Activated T-helper 1 cell treated with anti-CD3 and anti-CD28 coated beads, Interleukin-12 subunit alpha, Interleukin-12 subunit beta, Interleukin-2, Interleukin-4 antibody, amounts not matched to agents 30 ng/mL and 10 ng/mL and 1 ng/mL, durations not matched to agents 14 hours and 24 hours and 36 hours (primary cell): ENCODE measurements at regions of chr3 and their contacts with region 1.

Region 1: GRCh38 chr3:153161138-153161713 is 800 bp upstream of the RAP2B start:
- DNase-seq: peak; percentile 91
- H3K4me3 Mint-ChIP-seq: peak overlapping the region; percentile 90
- H3K27ac Mint-ChIP-seq: peak overlapping the region; percentile 97
- H3K4me1 Mint-ChIP-seq: peaks cover 47% of the 10 kb centered on the region
- H3K27me3 Mint-ChIP-seq: no peaks in the 10 kb centered on the region

Region 2: DNA sequence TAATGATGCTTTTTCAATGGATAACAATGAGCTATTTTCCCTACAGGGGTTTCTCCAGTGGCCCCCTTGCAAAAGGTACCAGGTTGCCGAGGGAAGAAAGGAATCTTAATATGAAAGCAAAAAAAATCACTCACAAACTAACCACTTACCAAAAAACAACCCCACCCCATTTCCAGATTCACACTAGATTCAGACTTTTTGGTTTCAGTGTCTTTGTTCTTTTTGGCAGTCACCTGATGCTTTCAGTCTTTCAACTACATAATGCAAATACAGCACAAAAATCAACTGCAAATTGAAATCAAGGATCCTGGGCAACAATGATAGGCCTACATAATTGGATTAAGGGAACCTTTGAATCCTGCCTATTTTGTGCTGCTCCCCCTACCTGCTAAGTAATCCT is 70.3 kb before region 1 on chr3:
- intact Hi-C with region 1: loop called (anchors 2 kb)
- DNase-seq: peak; percentile 4
- H3K4me3 Mint-ChIP-seq: no peak overlapping the region
- H3K27ac Mint-ChIP-seq: no peak overlapping the region
- H3K4me1 Mint-ChIP-seq: peaks cover 15% of the 10 kb centered on the region
- H3K27me3 Mint-ChIP-seq: peaks cover 9% of the 10 kb centered on the region

Region 3: DNA sequence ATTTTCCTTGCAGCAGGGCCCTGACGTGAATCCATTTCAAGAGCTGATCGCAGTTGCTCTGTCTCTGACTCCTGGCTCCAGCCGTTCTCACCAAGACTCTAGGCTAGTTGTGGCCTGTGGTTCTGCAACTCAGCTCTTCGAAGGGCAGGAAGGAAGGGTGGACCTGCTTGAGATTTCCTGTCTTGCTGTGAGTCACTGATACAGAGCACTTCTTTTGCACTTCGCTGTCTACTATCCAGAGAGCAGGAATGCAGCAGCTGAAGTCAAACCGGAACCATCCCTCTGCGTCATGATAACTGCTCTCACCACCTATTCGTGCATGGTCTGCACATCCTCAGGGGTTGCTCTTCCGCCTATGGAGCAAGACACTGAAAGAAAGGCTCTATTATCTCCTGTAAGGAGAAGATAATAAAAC is 60.5 kb after region 1 on chr3:
- intact Hi-C with region 1: loop called (anchors 1 kb)
- DNase-seq: peak; percentile 75
- H3K4me3 Mint-ChIP-seq: peak overlapping the region; percentile 72
- H3K27ac Mint-ChIP-seq: peak overlapping the region; percentile 90
- H3K4me1 Mint-ChIP-seq: peaks cover 47% of the 10 kb centered on the region
- H3K27me3 Mint-ChIP-seq: no peaks in the 10 kb centered on the region

Region 4: DNA sequence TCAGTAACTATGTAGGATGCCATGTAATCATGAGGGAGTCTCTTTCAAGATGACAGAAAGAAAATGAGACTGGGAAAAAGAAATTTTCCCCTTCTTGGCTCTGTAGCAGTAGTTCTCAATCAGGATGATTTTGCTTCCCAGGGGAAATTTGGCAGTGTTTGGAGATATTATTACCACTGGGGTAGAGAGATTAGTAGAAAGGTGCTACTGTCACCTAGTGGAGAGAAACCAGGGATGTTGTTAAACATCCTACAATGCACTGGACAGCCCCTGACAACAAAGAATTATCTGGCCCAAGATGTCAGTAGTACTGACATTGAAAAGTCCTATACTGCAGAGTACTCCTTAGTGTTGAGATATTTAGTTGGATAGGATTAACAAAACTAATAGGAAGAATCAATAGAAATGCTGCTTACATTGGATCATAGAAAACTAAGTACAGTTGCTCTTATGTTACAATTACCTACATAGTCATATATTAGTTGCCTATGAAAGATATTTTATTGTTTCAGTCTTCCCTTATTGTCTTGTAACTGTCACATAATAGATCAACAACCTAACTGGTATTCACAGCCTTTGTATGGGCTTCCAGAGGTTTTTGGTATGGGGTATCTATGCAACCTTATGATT is 434.1 kb after region 1 on chr3:
- intact Hi-C with region 1: loop called (anchors 10 kb)
- DNase-seq: no peak
- H3K4me3 Mint-ChIP-seq: no peak overlapping the region
- H3K27ac Mint-ChIP-seq: no peak overlapping the region
- H3K4me1 Mint-ChIP-seq: no peaks in the 10 kb centered on the region
- H3K27me3 Mint-ChIP-seq: no peaks in the 10 kb centered on the region

Region 5: DNA sequence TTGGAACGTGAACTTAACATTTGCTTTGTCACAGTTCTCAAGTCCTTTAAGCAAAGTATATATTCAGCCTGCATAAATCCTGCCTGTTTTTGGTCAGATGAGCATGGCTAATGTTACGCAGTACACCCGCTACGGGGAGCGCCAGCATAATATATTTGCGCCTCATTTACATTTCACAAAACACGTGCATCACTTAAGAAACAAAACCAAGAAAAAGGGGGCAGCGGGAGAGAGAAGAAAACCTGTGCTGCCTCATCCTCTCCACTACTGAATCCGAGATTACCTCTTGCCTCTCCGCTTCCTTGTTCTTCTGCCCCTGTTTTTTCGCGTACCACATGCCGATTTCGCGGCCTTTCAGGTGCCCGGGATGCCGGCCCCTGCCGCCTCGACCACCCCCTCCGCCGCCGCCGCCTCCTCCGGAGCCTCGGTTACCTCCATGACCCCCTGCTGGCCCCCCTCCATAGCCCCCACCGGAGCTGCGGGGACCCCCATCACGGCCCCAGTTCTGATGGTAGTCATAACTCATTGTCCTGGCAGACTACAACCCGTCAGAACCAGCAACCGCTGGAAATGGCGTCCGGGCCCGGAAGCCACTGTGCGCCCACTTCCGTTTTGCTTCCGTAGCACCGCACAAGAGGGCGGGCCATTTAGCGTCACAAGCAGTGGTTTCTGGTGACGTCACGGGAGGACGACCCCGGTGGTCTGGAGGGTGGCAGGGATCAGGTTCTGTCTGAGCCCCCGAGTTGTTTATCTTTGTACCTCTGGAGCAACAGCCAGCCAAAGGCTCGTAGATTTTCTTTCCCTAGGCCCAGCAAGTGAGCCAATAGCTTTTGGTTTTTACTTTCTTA is 1162.9 kb after region 1 on chr3 and contains the start of gene DHX36:
- intact Hi-C with region 1: loop called (anchors 5 kb)
- DNase-seq: peak; percentile 84
- H3K4me3 Mint-ChIP-seq: peak within 1 kb of the TSS; percentile 95
- H3K27ac Mint-ChIP-seq: peak within 1 kb of the TSS; percentile 96
- H3K4me1 Mint-ChIP-seq: peaks cover 20% of the 10 kb centered on the region
- H3K27me3 Mint-ChIP-seq: no peaks in the 10 kb centered on the region
- total RNA-seq, gene DHX36: 95.2 and 101 TPM in 2 replicates